Activated naive CD4-positive, alpha-beta T cell treated with anti-CD3 and anti-CD28 coated beads for 36 hours (primary cell): ENCODE measurements at regions of chr15 and their contacts with region 1.

Region 1: GRCh38 chr15:79923515-79924395 is 26.9 kb upstream of the MTHFS start:
- DNase-seq: peak; percentile 99
- H3K4me3 Mint-ChIP-seq: peak overlapping the region; percentile 86
- H3K27ac Mint-ChIP-seq: peak overlapping the region; percentile 95
- H3K4me1 Mint-ChIP-seq: peaks cover 25% of the 10 kb centered on the region
- H3K27me3 Mint-ChIP-seq: no peaks in the 10 kb centered on the region

Region 2: GRCh38 chr15:79881254-79881653 is 42.5 kb before region 1 on chr15:
- CTCF ChIA-PET with region 1: no interaction called
- intact Hi-C with region 1: no loop called
- DNase-seq: no peak
- H3K4me3 Mint-ChIP-seq: no peak overlapping the region
- H3K27ac Mint-ChIP-seq: no peak overlapping the region
- H3K4me1 Mint-ChIP-seq: peaks cover 23% of the 10 kb centered on the region
- H3K27me3 Mint-ChIP-seq: no peaks in the 10 kb centered on the region

Region 3: GRCh38 chr15:79896637-79897379 is 26.9 kb before region 1 on chr15 and contains the start of gene MTHFS:
- CTCF ChIA-PET with region 1: interaction called, 8 read pairs
- intact Hi-C with region 1: loop called (anchors 1 kb)
- DNase-seq: peak; percentile 76
- H3K4me3 Mint-ChIP-seq: peak within 1 kb of the TSS; percentile 100
- H3K27ac Mint-ChIP-seq: peak within 1 kb of the TSS; percentile 100
- H3K4me1 Mint-ChIP-seq: peaks cover 42% of the 10 kb centered on the region
- H3K27me3 Mint-ChIP-seq: no peaks in the 10 kb centered on the region
- total RNA-seq, gene MTHFS: 44.8 to 47.0 TPM

Region 4: DNA sequence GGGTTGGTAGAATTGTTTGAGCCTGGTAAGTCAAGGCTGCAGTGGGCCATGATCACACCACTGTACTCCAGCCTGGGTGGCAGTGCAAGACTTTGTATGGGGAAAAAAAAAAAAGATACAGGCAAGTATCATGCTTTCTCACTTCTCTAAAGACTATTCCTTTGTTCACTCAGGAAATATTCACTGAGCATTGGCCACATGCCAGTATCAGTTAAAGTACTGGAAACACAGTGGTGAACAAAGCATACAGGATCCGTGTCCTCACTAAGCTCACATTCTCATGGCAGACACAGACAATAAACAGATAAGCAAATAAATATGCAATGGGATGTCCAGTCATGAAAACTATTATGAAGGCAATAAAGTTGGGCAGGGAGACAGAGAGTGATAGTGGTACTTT is 21.8 kb before region 1 on chr15:
- CTCF ChIA-PET with region 1: interaction called, 3 read pairs
- intact Hi-C with region 1: loop called (anchors 1 kb)
- DNase-seq: no peak
- H3K4me3 Mint-ChIP-seq: no peak overlapping the region
- H3K27ac Mint-ChIP-seq: no peak overlapping the region
- H3K4me1 Mint-ChIP-seq: peaks cover 40% of the 10 kb centered on the region
- H3K27me3 Mint-ChIP-seq: no peaks in the 10 kb centered on the region

Region 5: DNA sequence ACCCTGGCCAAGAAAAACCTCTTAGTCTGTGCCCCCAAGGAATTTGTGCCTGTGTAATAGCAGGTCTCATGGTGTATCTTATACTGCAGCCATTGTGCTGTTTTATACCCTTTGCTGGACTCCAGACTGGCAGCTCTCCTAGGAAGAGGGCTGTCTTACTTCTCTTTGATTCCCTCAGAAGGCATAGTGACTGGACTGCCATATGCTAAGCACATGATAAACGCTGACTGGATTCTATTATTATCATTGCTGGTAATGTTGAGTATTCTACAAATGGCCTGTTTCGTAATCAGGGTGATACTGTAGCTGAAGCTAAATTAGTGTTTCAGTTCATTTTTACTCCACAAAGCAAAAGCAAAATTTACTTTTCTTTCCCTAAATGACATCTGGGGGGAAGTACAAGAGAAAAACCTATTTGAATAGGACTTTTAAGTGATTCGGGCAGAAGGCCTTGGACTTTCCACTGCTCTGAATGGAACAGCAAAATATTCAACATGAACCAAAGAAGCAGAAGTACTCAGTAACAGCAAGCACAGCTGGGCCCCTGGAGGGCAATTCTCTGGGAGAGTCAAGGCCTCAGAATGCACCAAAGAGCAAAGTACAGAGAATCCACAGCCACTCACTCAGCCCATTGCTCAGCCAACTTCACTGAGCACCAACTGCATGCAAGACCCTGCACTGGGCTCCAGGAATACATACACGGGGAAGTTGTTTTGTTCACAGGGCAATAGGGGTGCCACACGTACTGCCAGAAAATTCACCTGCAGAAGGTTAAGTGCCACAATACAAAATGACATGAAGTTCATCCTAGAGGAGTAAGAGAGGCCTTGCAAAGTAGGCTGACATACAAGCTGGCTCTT is 55.1 kb after region 1 on chr15:
- CTCF ChIA-PET with region 1: no interaction called
- intact Hi-C with region 1: loop called (anchors 2 kb)
- DNase-seq: peak; percentile 69
- H3K4me3 Mint-ChIP-seq: peak overlapping the region; percentile 41
- H3K27ac Mint-ChIP-seq: peak overlapping the region; percentile 91
- H3K4me1 Mint-ChIP-seq: peaks cover 49% of the 10 kb centered on the region
- H3K27me3 Mint-ChIP-seq: no peaks in the 10 kb centered on the region

Region 6: DNA sequence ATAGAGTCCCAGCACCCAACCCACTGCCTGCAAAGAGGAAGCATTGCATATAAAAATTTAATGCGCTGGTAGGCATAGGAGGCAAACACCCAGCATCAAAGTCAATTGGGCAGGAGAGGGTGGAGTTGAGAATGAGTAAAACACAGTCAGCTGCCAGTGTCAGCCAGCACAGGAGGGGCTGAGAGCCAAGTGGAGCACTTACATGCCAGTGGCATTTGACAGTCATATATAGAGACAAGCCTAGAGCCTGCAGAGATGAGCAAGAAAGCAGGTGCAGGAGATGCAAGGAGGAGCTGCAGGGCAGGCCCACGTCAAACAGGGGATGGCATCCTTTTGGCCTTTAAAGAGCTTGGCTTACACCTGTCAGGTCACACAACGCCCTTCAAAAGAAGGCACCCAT is 108.1 kb after region 1 on chr15:
- CTCF ChIA-PET with region 1: no interaction called
- intact Hi-C with region 1: loop called (anchors 1 kb)
- DNase-seq: peak; percentile 58
- H3K4me3 Mint-ChIP-seq: no peak overlapping the region
- H3K27ac Mint-ChIP-seq: no peak overlapping the region
- H3K4me1 Mint-ChIP-seq: peaks cover 22% of the 10 kb centered on the region
- H3K27me3 Mint-ChIP-seq: no peaks in the 10 kb centered on the region

Region 7: GRCh38 chr15:80152180-80152845 is 228.6 kb after region 1 on chr15:
- CTCF ChIA-PET with region 1: no interaction called
- intact Hi-C with region 1: loop called (anchors 1 kb)
- DNase-seq: peak; percentile 96
- H3K4me3 Mint-ChIP-seq: peak overlapping the region; percentile 87
- H3K27ac Mint-ChIP-seq: peak overlapping the region; percentile 36
- H3K4me1 Mint-ChIP-seq: peaks cover 19% of the 10 kb centered on the region
- H3K27me3 Mint-ChIP-seq: no peaks in the 10 kb centered on the region

Region 8: DNA sequence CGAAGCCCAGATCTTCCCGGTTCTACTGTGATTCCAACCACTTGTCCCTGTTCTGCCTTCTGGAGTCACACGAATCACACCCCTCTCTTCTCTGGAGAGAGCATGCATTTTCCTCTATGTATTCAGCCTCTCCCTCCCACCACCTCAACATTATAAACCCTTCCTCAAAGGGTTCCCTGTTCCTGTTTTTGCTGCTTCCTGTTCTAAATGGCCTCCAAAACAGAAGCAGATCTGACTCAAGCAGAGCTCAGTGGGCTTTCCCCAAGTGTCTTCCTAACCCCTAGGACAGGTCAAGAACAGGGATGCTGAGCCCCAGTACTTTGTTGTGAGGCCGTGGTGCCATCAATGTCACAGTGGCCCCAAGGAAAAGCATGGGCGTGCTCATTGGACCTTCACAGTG is 404.7 kb after region 1 on chr15:
- CTCF ChIA-PET with region 1: no interaction called
- intact Hi-C with region 1: no loop called
- DNase-seq: no peak
- H3K4me3 Mint-ChIP-seq: no peak overlapping the region
- H3K27ac Mint-ChIP-seq: no peak overlapping the region
- H3K4me1 Mint-ChIP-seq: no peaks in the 10 kb centered on the region
- H3K27me3 Mint-ChIP-seq: peaks cover 4% of the 10 kb centered on the region